CD4-positive, alpha-beta T cell (primary cell): ENCODE measurements at regions of chrX and their contacts with region 1.

Region 1: DNA sequence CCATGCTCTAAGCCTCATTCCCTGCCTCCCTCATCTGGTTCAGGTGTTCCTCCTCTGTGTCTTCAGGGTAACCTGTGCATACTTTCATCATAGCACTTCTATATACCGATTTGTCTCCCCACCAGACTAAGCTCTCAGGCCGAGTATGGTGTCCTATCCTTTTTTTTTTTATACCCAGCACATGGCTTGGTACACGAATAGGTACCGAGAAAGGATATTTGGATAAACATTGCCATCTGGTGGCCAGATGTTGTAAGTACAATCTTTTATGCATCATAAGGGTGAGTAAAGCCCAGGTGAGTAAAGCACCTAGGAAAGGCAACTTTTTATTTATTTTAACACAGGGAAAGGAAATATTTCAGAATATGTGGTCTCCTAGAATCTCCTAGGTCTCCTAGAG is 68.4 kb downstream of the MID2 start:
- DNase-seq: peak in 6 of 14 experiments; percentile 1 to 73 (median 54)
- ATAC-seq: peak; percentile 76
- H3K4me3 ChIP-seq: no peak overlapping the region
- H3K4me3 Mint-ChIP-seq: no peak overlapping the region
- H3K27ac ChIP-seq: no peak overlapping the region
- H3K27ac Mint-ChIP-seq: no peak overlapping the region
- H3K4me1 ChIP-seq: no peaks in the 10 kb centered on the region
- H3K4me1 Mint-ChIP-seq: no peaks in the 10 kb centered on the region
- H3K27me3 ChIP-seq: no peaks in the 10 kb centered on the region
- H3K27me3 Mint-ChIP-seq: no peaks in the 10 kb centered on the region
- CTCF ChIP-seq: peak; percentile 69

Region 2: GRCh38 chrX:106874075-106874474 is 1020.0 kb before region 1 on chrX:
- CTCF ChIA-PET with region 1: no interaction called
- POLR2A ChIA-PET with region 1: no interaction called
- intact Hi-C with region 1: loop called in 1 of 2 experiments (anchors 2 kb)
- DNase-seq: peak in 3 of 14 experiments; percentile 18 to 34 (median 33)
- ATAC-seq: no peak
- H3K4me3 ChIP-seq: no peak overlapping the region
- H3K4me3 Mint-ChIP-seq: no peak overlapping the region
- H3K27ac ChIP-seq: no peak overlapping the region
- H3K27ac Mint-ChIP-seq: no peak overlapping the region
- H3K4me1 ChIP-seq: no peaks in the 10 kb centered on the region
- H3K4me1 Mint-ChIP-seq: no peaks in the 10 kb centered on the region
- H3K27me3 ChIP-seq: no peaks in the 10 kb centered on the region
- H3K27me3 Mint-ChIP-seq: peaks cover 6% of the 10 kb centered on the region
- CTCF ChIP-seq: peak; percentile 62

Region 3: DNA sequence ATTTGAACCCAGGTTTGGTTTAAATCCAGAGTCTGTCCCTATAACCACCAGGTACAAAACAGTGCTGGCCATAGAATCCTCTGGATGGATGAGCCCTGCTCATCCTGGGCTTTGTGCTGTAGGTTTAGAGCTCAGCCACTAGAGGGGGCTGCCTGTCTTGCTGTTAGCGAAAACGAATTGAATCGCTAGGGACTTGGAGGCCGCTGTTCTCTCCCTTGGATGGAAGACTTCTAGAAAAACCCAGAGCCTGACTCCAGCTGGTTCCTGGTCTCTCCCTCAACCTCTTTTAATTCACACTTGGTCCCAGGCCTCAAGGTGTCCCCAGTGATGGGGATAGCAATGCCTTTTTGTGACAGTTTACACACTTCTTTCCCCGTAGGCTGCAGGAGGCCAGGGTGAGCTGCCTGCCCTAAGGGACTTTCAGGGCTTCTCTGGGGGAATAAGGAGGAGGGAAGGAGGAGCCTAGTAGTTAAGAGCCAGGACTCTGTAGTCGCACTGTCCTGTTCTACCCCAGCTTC is 999.6 kb before region 1 on chrX:
- CTCF ChIA-PET with region 1: no interaction called
- POLR2A ChIA-PET with region 1: no interaction called
- intact Hi-C with region 1: loop called (anchors 2 to 5 kb)
- DNase-seq: peak; percentile 12 to 67 (median 26)
- ATAC-seq: peak; percentile 62
- H3K4me3 ChIP-seq: no peak overlapping the region
- H3K4me3 Mint-ChIP-seq: no peak overlapping the region
- H3K27ac ChIP-seq: no peak overlapping the region
- H3K27ac Mint-ChIP-seq: no peak overlapping the region
- H3K4me1 ChIP-seq: no peaks in the 10 kb centered on the region
- H3K4me1 Mint-ChIP-seq: no peaks in the 10 kb centered on the region
- H3K27me3 ChIP-seq: peaks cover 0 to 3% of the 10 kb centered on the region in 2 experiments
- H3K27me3 Mint-ChIP-seq: peaks cover 21% of the 10 kb centered on the region
- CTCF ChIP-seq: peak; percentile 54

Region 4: GRCh38 chrX:107537815-107538214 is 356.2 kb before region 1 on chrX:
- CTCF ChIA-PET with region 1: no interaction called
- POLR2A ChIA-PET with region 1: no interaction called
- intact Hi-C with region 1: loop called in 1 of 2 experiments (anchors 5 kb)
- DNase-seq: peak in 11 of 14 experiments; percentile 0 to 59 (median 9)
- ATAC-seq: peak; percentile 54
- H3K4me3 ChIP-seq: no peak overlapping the region
- H3K4me3 Mint-ChIP-seq: no peak overlapping the region
- H3K27ac ChIP-seq: no peak overlapping the region
- H3K27ac Mint-ChIP-seq: no peak overlapping the region
- H3K4me1 ChIP-seq: no peaks in the 10 kb centered on the region
- H3K4me1 Mint-ChIP-seq: no peaks in the 10 kb centered on the region
- H3K27me3 ChIP-seq: no peaks in the 10 kb centered on the region
- H3K27me3 Mint-ChIP-seq: peaks cover 16% of the 10 kb centered on the region
- CTCF ChIP-seq: no peak

Region 5: DNA sequence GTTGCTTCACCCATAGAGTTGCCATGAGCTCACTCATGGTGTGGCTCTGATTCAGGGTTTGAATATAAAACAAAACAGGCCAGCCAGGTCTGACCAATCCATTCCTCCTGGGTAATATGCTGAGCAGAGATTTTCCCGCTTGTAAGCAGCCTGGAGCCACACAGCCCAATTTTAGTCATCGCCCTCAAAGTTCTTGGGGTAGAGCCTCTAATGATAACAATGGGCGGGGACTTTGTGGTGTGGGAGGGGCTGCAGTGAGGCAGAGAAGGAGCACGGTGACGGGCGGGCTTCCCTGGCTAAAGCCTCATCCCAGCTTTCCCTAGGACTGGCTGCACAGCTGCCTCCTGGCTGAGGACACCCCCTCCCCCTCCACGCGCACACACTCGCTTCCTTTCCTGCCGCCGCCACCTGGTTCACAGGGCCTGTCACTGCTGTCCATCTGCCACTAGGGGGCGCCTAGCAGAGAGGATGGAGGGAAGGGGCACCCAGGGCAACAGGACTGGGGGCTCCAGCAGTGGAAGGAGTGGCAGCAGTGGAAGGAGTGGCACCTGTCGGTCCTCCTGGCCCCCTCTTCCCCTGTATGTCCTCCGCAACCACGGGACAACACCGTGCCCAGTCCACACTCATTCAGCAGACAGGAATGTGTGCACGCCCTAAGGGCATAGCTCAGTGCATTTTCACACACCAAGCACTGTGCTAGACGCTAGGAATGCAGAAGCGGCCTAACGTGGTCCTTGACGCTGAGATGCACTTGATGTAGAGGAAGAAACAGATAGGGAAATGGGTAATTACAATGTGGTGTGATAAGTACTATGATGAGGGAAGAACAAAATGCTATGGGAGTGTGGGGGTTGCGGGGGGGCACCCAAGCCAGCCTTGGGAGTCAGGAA is 238.9 kb before region 1 on chrX:
- CTCF ChIA-PET with region 1: no interaction called
- POLR2A ChIA-PET with region 1: no interaction called
- intact Hi-C with region 1: loop called (anchors 2 to 5 kb)
- DNase-seq: peak; percentile 49 to 81 (median 64)
- ATAC-seq: peak; percentile 92
- H3K4me3 ChIP-seq: no peak overlapping the region
- H3K4me3 Mint-ChIP-seq: no peak overlapping the region
- H3K27ac ChIP-seq: no peak overlapping the region
- H3K27ac Mint-ChIP-seq: peak overlapping the region; percentile 13
- H3K4me1 ChIP-seq: peaks cover 12% of the 10 kb centered on the region
- H3K4me1 Mint-ChIP-seq: peaks cover 29% of the 10 kb centered on the region
- H3K27me3 ChIP-seq: no peaks in the 10 kb centered on the region
- H3K27me3 Mint-ChIP-seq: no peaks in the 10 kb centered on the region
- CTCF ChIP-seq: peak; percentile 72

Region 6: GRCh38 chrX:107747596-107748161 is 146.4 kb before region 1 on chrX:
- CTCF ChIA-PET with region 1: no interaction called
- POLR2A ChIA-PET with region 1: no interaction called
- intact Hi-C with region 1: loop called in 1 of 2 experiments (anchors 10 kb)
- DNase-seq: no peak
- ATAC-seq: no peak
- H3K4me3 ChIP-seq: no peak overlapping the region
- H3K4me3 Mint-ChIP-seq: no peak overlapping the region
- H3K27ac ChIP-seq: no peak overlapping the region
- H3K27ac Mint-ChIP-seq: no peak overlapping the region
- H3K4me1 ChIP-seq: peaks cover 11% of the 10 kb centered on the region
- H3K4me1 Mint-ChIP-seq: peaks cover 11% of the 10 kb centered on the region
- H3K27me3 ChIP-seq: no peaks in the 10 kb centered on the region
- H3K27me3 Mint-ChIP-seq: no peaks in the 10 kb centered on the region
- CTCF ChIP-seq: no peak